ENCODE measurements at regions of chr2 and their contacts with region 1.

Region 1: DNA sequence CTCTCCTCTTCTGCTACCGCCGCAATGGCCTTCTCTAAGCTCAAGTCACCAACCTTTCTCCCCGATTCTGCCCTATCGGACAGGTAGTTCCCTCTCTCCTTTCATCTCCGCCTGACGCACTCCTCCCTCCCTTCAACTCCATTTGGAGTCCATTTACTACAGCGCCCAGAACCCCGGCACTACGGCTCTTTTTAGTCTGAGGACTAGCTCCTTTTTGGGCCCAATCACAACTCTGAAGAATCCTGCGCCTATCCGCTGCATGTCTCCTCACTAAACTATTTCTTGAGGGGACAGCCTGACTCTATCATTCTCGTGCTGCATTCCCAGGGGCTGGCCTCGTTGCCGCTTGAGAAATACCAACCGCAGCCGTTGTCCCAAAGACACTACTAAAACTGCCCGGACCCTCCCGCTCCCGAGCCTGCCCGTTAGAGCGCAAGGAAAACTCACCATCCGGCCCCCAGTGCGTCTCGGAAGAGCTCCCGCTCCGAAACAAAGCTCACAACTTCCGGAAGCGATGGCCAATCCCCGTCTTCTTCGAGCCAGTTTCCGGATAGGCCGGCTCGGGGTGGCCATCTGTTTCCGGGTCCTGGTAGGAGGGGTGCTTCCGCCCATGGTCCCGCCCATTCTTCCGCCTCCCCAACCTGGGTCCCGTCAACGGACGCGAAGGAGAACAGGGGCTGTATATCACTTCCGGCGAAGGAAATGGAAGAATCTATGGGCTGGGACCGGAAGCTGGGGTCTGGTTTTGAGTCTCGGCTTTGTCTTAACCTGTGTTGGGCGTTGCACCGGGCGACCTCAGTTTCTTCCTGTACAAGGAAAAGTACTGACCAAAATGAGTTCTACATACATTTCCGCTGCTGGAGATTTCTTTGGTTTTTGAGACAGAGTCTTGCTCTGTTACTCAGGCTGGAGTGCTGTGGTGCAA is at the start of gene TPRKB:
- DNase-seq: peak; percentile 84 to 98
- H3K4me3 ChIP-seq: peak within 1 kb of the TSS; percentile 73 to 79
- H3K27ac ChIP-seq: peak within 1 kb of the TSS; percentile 64 to 73
- H3K4me1 ChIP-seq: peaks cover 0 to 16% of the 10 kb centered on the region in 2 donors
- H3K27me3 ChIP-seq: no peaks in the 10 kb centered on the region
- CTCF ChIP-seq: no peak
- total RNA-seq, gene TPRKB: 11.1 TPM

Region 2: DNA sequence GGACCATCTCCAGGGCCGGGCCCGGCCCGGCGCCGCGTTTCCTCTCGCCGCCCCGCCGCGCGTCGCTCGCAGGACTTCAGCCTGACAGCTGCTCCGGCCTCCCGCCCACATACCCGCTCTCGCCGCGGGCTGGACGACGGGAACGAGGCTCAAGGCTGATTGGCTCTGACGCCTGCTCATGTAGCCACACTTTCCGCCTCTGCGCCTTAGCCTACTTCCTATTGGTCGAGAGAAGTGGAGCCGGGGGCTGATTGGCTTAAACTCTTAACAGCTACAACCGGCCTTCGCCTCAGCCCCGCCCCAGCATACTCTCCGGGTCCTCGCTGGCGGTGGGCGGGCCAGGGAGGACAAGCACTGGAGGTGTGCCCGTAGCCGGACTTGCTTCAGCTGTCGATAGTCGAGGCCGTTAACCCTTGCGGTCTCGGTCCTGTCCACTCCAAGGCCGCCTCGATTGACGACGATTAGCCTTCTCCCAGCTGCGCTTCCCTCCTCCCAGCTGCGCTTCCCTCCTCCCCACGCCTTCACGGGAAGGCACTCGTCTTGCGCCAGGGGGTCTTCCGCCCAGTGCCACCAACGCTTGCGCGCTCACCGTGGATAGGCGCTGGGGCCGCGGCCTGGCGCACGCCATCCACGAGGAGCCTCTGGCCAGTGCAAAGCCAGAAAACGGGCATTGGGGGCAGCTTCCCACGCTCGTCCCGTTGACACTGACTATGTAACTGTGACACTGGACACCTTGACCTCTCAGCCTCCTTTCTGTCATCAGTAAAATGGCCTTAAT is 503.8 kb before region 1 on chr2 and contains the start of gene PRADC1:
- intact Hi-C with region 1: loop called (anchors 1 kb)
- DNase-seq: peak; percentile 98 to 100
- H3K4me3 ChIP-seq: peak within 1 kb of the TSS; percentile 82 to 85
- H3K27ac ChIP-seq: peak within 1 kb of the TSS; percentile 93 to 96
- H3K4me1 ChIP-seq: peaks cover 4 to 5% of the 10 kb centered on the region in 2 donors
- H3K27me3 ChIP-seq: no peaks in the 10 kb centered on the region
- CTCF ChIP-seq: no peak
- total RNA-seq, gene PRADC1: 77.0 TPM

Region 3: DNA sequence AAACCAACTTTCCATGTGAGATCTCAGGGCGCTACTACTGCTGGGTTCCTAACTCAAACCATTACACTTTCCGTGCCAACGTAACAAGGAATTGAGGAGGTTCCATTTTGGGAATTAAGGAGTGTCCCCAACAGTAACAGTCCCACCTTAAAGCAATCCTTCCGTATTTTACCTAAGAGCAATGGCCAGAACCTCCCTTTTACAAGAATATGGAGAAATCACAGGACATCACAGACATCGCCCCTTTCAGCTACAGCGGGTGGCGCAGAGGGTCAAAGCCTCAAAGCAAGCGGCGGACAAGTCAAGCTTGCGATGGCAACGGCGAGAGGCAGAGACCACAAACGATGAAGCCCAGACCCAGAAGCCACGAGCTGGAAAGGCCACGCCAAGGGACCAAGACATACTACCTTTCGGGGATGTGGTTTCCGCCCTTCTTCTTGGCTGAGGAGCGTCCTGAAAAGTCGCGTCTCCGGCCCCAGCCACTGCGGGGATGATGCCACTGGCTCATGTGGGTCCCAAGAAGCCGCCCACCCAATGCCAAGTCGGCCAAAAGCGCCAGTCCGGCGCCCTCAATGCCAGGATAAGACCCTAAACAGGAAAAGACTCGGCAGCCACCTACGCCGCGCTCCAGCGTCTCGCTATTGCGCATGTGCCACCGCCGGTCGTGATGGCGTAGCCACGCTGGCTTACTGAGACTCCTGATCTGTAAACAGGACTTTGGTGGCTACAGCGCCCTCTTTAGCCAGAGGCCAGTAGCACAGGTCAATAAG is 42.5 kb after region 1 on chr2 and contains the start of gene DUSP11:
- intact Hi-C with region 1: loop called (anchors 5 kb)
- DNase-seq: peak; percentile 90 to 99
- H3K4me3 ChIP-seq: peak within 1 kb of the TSS; percentile 79 to 92
- H3K27ac ChIP-seq: peak within 1 kb of the TSS; percentile 82 to 92
- H3K4me1 ChIP-seq: peaks cover 5 to 12% of the 10 kb centered on the region in 2 donors
- H3K27me3 ChIP-seq: no peaks in the 10 kb centered on the region
- CTCF ChIP-seq: peak; percentile 84 to 94 (median 90)
- total RNA-seq, gene DUSP11: 24.6 TPM